ENCODE measurements at regions of chr12 and their contacts with region 1.

Region 1: GRCh38 chr12:123141615-123142517 is 9.0 kb downstream of the PITPNM2 start:
- DNase-seq: no peak
- H3K4me3 ChIP-seq: no peak overlapping the region
- H3K27ac ChIP-seq: peak overlapping the region; percentile 2 to 73 (median 62)
- H3K4me1 ChIP-seq: peaks cover 21 to 51% (median 38%) of the 10 kb centered on the region in 6 donors
- H3K27me3 ChIP-seq: no peaks in the 10 kb centered on the region
- CTCF ChIP-seq: no peak
- POLR2A ChIP-seq: no peak

Region 2: GRCh38 chr12:122965851-122966722 is 175.8 kb before region 1 on chr12 and contains the start of gene ABCB9:
- intact Hi-C with region 1: no loop called
- DNase-seq: peak; percentile 98
- H3K4me3 ChIP-seq: peak within 1 kb of the TSS; percentile 46 to 77 (median 54)
- H3K27ac ChIP-seq: peak within 1 kb of the TSS; percentile 7 to 78 (median 70)
- H3K4me1 ChIP-seq: peaks cover 7 to 41% (median 28%) of the 10 kb centered on the region in 6 donors
- H3K27me3 ChIP-seq: no peaks in the 10 kb centered on the region
- CTCF ChIP-seq: no peak
- POLR2A ChIP-seq: no peak
- total RNA-seq, gene ABCB9: 4.1 to 6.2 (median 5.5) TPM

Region 3: GRCh38 chr12:122980183-122981046 is 161.5 kb before region 1 on chr12 and contains the start of gene ARL6IP4:
- intact Hi-C with region 1: loop called (anchors 10 kb)
- DNase-seq: peak; percentile 95
- H3K4me3 ChIP-seq: peak within 1 kb of the TSS; percentile 83 to 99 (median 96)
- H3K27ac ChIP-seq: peak within 1 kb of the TSS; percentile 89 to 95 (median 93)
- H3K4me1 ChIP-seq: peaks cover 58 to 95% (median 90%) of the 10 kb centered on the region in 6 donors
- H3K27me3 ChIP-seq: no peaks in the 10 kb centered on the region
- CTCF ChIP-seq: peak in 4 of 11 experiments; percentile 12 to 29 (median 14)
- POLR2A ChIP-seq: peak in 1 of 3 donors; percentile 64
- total RNA-seq, gene ARL6IP4: 150 to 202 (median 181) TPM